Naive thymus-derived CD4-positive, alpha-beta T cell (primary cell): ENCODE measurements at regions of chr2 and their contacts with region 1.

Region 1: GRCh38 chr2:105749583-105750400 is 5.1 kb downstream of the NCK2 start:
- DNase-seq: no peak
- ATAC-seq: peak; percentile 5
- H3K4me3 ChIP-seq: peak overlapping the region; percentile 94
- H3K4me3 Mint-ChIP-seq: peak overlapping the region; percentile 71 to 99 (median 93)
- H3K27ac ChIP-seq: peak overlapping the region; percentile 89
- H3K27ac Mint-ChIP-seq: peak overlapping the region; percentile 92 to 99 (median 97)
- H3K4me1 ChIP-seq: peaks cover 67 to 74% of the 10 kb centered on the region in 2 donors
- H3K4me1 Mint-ChIP-seq: peaks cover 53 to 85% (median 81%) of the 10 kb centered on the region in 7 donors
- H3K27me3 ChIP-seq: no peaks in the 10 kb centered on the region
- H3K27me3 Mint-ChIP-seq: no peaks in the 10 kb centered on the region

Region 2: GRCh38 chr2:105737980-105738657 is 11.7 kb before region 1 on chr2:
- CTCF ChIA-PET with region 1: interaction called, 4 read pairs
- POLR2A ChIA-PET with region 1: interaction called, 19 read pairs
- intact Hi-C with region 1: loop called in 1 of 2 experiments (anchors 1 kb)
- DNase-seq: peak in 6 of 9 donors; percentile 56 to 77 (median 70)
- ATAC-seq: peak; percentile 88
- H3K4me3 ChIP-seq: peak overlapping the region; percentile 37
- H3K4me3 Mint-ChIP-seq: peak overlapping the region; percentile 54 to 84 (median 80)
- H3K27ac ChIP-seq: peak overlapping the region; percentile 74
- H3K27ac Mint-ChIP-seq: peak overlapping the region; percentile 90 to 99 (median 96)
- H3K4me1 ChIP-seq: peaks cover 40 to 41% of the 10 kb centered on the region in 2 donors
- H3K4me1 Mint-ChIP-seq: peaks cover 47 to 88% (median 83%) of the 10 kb centered on the region in 7 donors
- H3K27me3 ChIP-seq: no peaks in the 10 kb centered on the region
- H3K27me3 Mint-ChIP-seq: no peaks in the 10 kb centered on the region

Region 3: DNA sequence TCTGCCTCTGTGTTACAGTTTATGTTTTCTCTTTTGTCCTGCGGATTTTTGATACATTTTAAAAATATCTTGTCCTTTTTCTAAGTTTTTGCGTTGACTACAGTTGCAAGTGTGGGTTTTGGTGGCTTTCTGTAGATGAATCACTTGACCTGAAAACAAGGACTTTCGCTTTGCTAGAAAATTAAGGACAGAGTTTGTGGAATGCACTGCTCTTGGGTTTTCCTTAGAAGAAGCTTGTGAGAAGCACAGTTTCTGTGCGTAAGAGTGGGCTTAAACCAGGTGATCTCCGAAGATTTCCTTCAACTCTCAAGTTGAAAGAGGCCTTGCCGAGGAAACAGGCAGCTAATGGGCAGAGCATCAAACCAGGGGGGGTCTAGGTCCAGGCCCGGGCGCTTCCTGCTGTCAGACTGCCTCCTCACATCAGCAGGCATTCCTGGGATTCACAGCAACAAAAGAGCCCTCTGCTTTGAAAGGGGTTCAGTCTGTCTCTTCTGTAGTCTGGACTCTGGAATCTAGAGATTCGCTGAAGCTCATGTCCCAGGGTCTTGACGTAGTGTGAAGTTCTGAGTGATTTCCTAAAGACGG is 12.2 kb after region 1 on chr2:
- CTCF ChIA-PET with region 1: interaction called, 3 read pairs
- POLR2A ChIA-PET with region 1: interaction called, 39 read pairs
- intact Hi-C with region 1: loop called in 1 of 2 experiments (anchors 1 kb)
- DNase-seq: no peak
- ATAC-seq: no peak
- H3K4me3 ChIP-seq: peak overlapping the region; percentile 31
- H3K4me3 Mint-ChIP-seq: peak overlapping the region; percentile 15 to 63 (median 50)
- H3K27ac ChIP-seq: peak overlapping the region; percentile 58
- H3K27ac Mint-ChIP-seq: peak overlapping the region; percentile 55 to 93 (median 92)
- H3K4me1 ChIP-seq: peaks cover 84 to 95% of the 10 kb centered on the region in 2 donors
- H3K4me1 Mint-ChIP-seq: peaks cover 73 to 100% (median 91%) of the 10 kb centered on the region in 7 donors
- H3K27me3 ChIP-seq: no peaks in the 10 kb centered on the region
- H3K27me3 Mint-ChIP-seq: no peaks in the 10 kb centered on the region